CD4-positive, alpha-beta memory T cell (primary cell): ENCODE measurements at regions of chr5 and their contacts with region 1.

Region 1: GRCh38 chr5:75734913-75735789 is 17.9 kb upstream of the POC5 start:
- DNase-seq: peak in 2 of 5 donors; percentile 16
- H3K4me3 ChIP-seq: no peak overlapping the region
- H3K4me3 Mint-ChIP-seq: no peak overlapping the region
- H3K27ac ChIP-seq: no peak overlapping the region
- H3K27ac Mint-ChIP-seq: no peak overlapping the region
- H3K4me1 ChIP-seq: no peaks in the 10 kb centered on the region
- H3K4me1 Mint-ChIP-seq: no peaks in the 10 kb centered on the region
- H3K27me3 ChIP-seq: no peaks in the 10 kb centered on the region
- H3K27me3 Mint-ChIP-seq: peaks cover 5 to 10% of the 10 kb centered on the region in 2 donors

Region 2: GRCh38 chr5:75668977-75669689 is 66.0 kb before region 1 on chr5:
- CTCF ChIA-PET with region 1: no interaction called
- POLR2A ChIA-PET with region 1: no interaction called
- intact Hi-C with region 1: no loop called
- DNase-seq: peak in 2 of 5 donors; percentile 14 to 20
- H3K4me3 ChIP-seq: peak overlapping the region; percentile 42 to 49
- H3K4me3 Mint-ChIP-seq: peak overlapping the region; percentile 82 to 93 (median 86)
- H3K27ac ChIP-seq: peak overlapping the region; percentile 8
- H3K27ac Mint-ChIP-seq: peak overlapping the region; percentile 4 to 94 (median 77)
- H3K4me1 ChIP-seq: peaks cover 13% of the 10 kb centered on the region
- H3K4me1 Mint-ChIP-seq: peaks cover 12 to 19% (median 16%) of the 10 kb centered on the region in 4 donors
- H3K27me3 ChIP-seq: no peaks in the 10 kb centered on the region
- H3K27me3 Mint-ChIP-seq: no peaks in the 10 kb centered on the region

Region 3: GRCh38 chr5:75717082-75717922 is 17.8 kb before region 1 on chr5 and contains the start of gene POC5:
- CTCF ChIA-PET with region 1: no interaction called
- POLR2A ChIA-PET with region 1: no interaction called
- intact Hi-C with region 1: no loop called
- DNase-seq: peak; percentile 98 to 99 (median 98)
- H3K4me3 ChIP-seq: peak within 1 kb of the TSS; percentile 74 to 95
- H3K4me3 Mint-ChIP-seq: peak within 1 kb of the TSS; percentile 99 to 100 (median 100)
- H3K27ac ChIP-seq: peak within 1 kb of the TSS; percentile 74
- H3K27ac Mint-ChIP-seq: peak within 1 kb of the TSS; percentile 98 to 100 (median 99)
- H3K4me1 ChIP-seq: peaks cover 18% of the 10 kb centered on the region
- H3K4me1 Mint-ChIP-seq: peaks cover 29 to 43% (median 36%) of the 10 kb centered on the region in 4 donors
- H3K27me3 ChIP-seq: no peaks in the 10 kb centered on the region
- H3K27me3 Mint-ChIP-seq: no peaks in the 10 kb centered on the region
- total RNA-seq, gene POC5: 15.1 to 20.0 TPM

Region 4: DNA sequence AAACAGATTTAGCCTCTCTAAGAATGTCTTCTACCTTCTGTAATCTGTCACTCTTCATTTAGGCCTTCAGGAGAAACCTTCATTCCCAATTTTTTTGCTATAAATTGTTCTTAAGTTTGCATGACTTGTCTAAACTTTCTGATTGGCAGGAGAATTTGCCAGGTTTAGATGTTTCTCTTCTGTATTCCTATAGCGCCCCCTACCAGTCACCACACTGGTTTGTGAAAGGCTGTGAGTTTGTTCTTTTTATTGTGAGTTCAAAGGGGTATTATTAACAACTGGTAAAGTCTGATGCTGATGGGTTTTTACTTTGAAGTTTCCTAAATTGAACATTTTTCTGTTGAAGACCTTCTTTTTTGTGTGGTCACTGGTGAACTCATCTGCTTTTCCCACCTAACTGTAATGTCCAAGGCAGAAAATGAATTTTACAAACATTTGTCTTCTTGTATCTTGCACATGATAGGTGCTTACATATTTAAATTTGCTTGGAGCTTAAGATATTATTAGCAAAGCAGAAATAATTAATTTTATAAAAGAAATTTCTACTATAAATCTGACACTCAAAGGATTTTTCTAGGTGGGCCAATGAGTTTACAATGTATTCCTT is 906.5 kb after region 1 on chr5:
- CTCF ChIA-PET with region 1: no interaction called
- POLR2A ChIA-PET with region 1: no interaction called
- intact Hi-C with region 1: loop called (anchors 2 kb)
- DNase-seq: peak; percentile 47 to 60 (median 56)
- H3K4me3 ChIP-seq: no peak overlapping the region
- H3K4me3 Mint-ChIP-seq: no peak overlapping the region
- H3K27ac ChIP-seq: no peak overlapping the region
- H3K27ac Mint-ChIP-seq: peak overlapping the region in 3 of 7 donors; percentile 9 to 61 (median 34)
- H3K4me1 ChIP-seq: no peaks in the 10 kb centered on the region
- H3K4me1 Mint-ChIP-seq: peaks cover 0 to 3% (median 1%) of the 10 kb centered on the region in 4 donors
- H3K27me3 ChIP-seq: no peaks in the 10 kb centered on the region
- H3K27me3 Mint-ChIP-seq: no peaks in the 10 kb centered on the region